Activated CD4-positive, alpha-beta T cell treated with anti-CD3 and anti-CD28 coated beads for 36 hours (primary cell): ENCODE measurements at regions of chr20 and their contacts with region 1.

Region 1: GRCh38 chr20:38645980-38646858 is 44.6 kb downstream of the ARHGAP40 start:
- DNase-seq: peak; percentile 93
- ATAC-seq: peak; percentile 98
- H3K4me3 Mint-ChIP-seq: peak overlapping the region; percentile 44
- H3K27ac Mint-ChIP-seq: peak overlapping the region; percentile 41
- H3K4me1 Mint-ChIP-seq: peaks cover 7% of the 10 kb centered on the region
- H3K27me3 Mint-ChIP-seq: peaks cover 30% of the 10 kb centered on the region

Region 2: DNA sequence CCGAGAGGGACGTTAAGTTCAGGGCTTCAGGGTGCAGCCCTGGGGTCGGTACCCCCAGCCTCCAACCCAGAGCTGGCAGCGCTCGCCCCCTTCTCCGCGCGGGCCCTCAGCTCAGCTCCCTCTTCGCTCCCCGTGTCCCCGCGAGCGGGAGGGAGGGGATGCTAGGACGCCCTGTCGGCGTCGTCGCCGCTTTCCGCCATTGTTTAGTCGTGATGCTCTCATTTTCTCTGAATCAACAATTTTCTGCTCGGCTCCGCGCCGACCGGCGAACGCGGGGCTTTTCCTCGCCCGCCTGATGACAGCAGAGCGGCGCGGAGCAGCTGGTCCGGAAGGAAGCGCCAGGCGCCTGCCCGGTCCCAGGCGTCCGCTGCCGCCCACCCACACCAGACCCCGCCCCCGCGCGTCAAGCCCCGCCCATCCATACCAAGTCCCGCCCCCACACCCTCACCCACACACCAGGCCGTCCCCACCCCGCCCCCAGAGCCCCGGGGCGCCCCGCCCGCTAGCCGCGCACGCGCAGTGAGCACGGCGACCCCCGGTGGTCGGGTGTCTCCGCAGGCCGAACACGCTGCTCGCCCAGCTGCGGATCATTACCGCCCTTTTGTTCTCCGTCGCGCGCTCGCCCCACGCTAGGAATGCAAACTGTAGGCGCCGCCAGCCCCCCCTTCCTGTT is 28.0 kb after region 1 on chr20:
- CTCF ChIA-PET with region 1: interaction called, 3 read pairs
- POLR2A ChIA-PET with region 1: no interaction called
- intact Hi-C with region 1: loop called in 1 of 2 experiments (anchors 1 kb)
- DNase-seq: peak; percentile 84
- ATAC-seq: peak; percentile 91
- H3K4me3 Mint-ChIP-seq: peak overlapping the region; percentile 63
- H3K27ac Mint-ChIP-seq: peak overlapping the region; percentile 49
- H3K4me1 Mint-ChIP-seq: peaks cover 5% of the 10 kb centered on the region
- H3K27me3 Mint-ChIP-seq: peaks cover 12% of the 10 kb centered on the region

Region 3: GRCh38 chr20:38790200-38791053 is 144.2 kb after region 1 on chr20:
- CTCF ChIA-PET with region 1: no interaction called
- POLR2A ChIA-PET with region 1: no interaction called
- intact Hi-C with region 1: loop called in 1 of 2 experiments (anchors 1 kb)
- DNase-seq: peak; percentile 79
- ATAC-seq: peak; percentile 90
- H3K4me3 Mint-ChIP-seq: peak overlapping the region; percentile 13
- H3K27ac Mint-ChIP-seq: no peak overlapping the region
- H3K4me1 Mint-ChIP-seq: peaks cover 17% of the 10 kb centered on the region
- H3K27me3 Mint-ChIP-seq: no peaks in the 10 kb centered on the region